AG04449 (cell line): ENCODE measurements at regions of chr2 and their contacts with region 1.

Region 1: DNA sequence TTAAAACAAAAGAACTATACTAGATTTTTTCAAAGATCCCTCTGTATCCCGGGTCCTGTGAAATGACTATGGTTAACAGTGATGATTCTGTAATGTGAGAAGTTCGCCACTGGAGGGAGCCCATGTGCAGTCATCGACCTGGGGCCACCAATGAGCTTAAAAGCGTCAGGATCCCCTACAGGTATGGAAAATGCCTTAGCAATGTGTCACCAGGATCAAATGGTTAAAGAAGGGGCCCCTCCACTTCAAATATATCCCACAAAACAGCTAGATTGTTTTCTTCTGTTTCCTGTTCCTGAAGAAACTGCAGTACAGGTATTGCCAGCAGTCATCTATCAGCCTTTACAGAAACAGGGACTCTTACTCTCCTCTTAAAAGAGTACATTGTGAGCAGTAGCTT is 15.3 kb downstream of the CHRNA1 start:
- DNase-seq: no peak
- H3K4me3 ChIP-seq: no peak overlapping the region
- CTCF ChIP-seq: peak; percentile 72

Region 2: GRCh38 chr2:174682578-174683391 is 66.2 kb before region 1 on chr2:
- CTCF ChIA-PET with region 1: no interaction called
- POLR2A ChIA-PET with region 1: no interaction called
- DNase-seq: no peak
- H3K4me3 ChIP-seq: peak overlapping the region; percentile 80
- CTCF ChIP-seq: no peak

Region 3: DNA sequence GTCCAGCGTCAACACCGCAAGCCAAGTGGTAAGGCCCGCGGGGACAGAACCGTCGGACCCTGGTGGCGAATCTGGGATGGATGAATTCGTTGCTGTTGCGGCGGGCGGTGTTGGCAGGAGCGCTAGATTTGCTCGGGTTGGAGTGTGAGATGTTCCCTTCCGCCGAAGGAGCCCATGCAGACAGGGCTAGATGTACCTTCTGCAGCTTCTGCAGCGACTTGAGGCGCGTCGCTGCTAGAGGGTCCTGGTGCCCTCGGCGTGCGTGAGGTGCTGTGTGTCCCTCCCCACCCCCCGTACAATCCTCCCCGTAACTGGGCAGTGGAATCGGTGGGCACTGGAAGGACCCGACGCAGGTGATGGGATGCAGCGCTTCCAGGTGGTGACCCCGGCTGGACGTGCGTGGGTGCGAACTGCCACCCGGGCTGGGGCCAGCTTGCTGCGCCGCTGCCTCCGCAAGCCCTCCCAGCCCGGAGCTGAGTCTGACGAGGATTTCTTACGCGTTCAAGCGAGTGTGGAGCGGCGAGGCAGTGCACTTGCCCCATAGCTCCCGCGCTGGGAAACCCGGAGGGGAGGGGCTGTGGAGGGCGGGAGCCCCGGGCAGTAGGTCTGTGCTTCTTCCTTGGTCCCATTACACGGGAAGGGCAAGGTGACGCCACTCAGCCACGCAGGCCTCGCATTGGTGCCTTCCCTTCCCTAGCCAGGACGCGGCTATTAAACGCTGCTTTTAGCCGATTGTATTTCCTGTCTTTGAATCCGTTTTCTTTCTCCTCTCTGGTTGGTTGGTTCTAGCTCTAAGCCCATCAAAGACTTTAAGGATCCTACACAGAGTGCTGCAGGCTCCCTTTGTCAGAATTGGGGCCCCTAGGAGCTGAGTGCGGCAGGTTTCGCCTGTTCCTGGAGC is 18.9 kb before region 1 on chr2:
- CTCF ChIA-PET with region 1: interaction called, 38 read pairs
- POLR2A ChIA-PET with region 1: no interaction called
- DNase-seq: no peak
- H3K4me3 ChIP-seq: peak overlapping the region; percentile 40
- CTCF ChIP-seq: no peak

Region 4: GRCh38 chr2:174764280-174765255 is 15.6 kb after region 1 on chr2 and contains the start of gene CHRNA1:
- CTCF ChIA-PET with region 1: interaction called, 96 read pairs
- POLR2A ChIA-PET with region 1: no interaction called
- DNase-seq: no peak
- H3K4me3 ChIP-seq: no peak within 1 kb of the TSS
- CTCF ChIP-seq: no peak

Region 5: DNA sequence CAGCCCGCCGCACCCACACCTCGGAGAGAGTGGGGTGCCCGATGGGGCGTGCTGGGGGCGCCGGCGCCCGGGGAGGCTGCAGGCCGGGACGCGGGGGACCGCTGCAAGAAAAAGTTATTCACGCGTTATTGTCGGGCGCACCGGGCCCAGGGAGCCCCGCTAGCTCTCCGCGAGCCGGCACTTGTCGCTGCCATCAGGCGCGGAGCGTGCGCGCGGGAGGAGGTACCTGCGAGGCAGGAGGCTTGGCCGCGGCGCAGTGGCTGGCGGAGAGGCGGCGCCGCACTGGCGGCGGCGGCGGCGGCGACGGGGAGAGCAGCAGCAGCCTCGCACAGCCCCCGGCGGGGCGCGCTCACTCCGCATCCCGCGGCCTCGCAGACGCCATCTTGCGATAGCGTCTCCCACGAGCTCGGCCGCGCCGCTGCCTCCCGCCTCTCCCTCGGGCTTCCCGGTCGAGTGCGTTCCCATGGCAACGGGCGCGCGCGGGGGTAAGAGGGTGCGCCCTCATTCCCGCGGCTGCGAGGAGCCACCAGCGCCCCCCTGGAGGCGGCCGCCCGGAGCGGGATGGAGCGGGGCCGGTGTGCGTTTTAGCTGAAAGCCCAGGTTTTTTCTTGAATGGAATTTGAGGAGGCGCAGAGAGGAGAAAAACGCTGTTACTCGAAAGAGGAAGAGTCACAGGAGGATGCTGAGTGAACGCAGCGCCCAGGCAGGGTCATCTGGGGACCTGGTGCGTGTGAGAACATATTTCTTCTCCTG is 256.2 kb after region 1 on chr2 and contains the start of gene CHN1:
- CTCF ChIA-PET with region 1: interaction called, 33 read pairs
- POLR2A ChIA-PET with region 1: no interaction called
- DNase-seq: no peak
- H3K4me3 ChIP-seq: peak within 1 kb of the TSS; percentile 64
- CTCF ChIP-seq: peak; percentile 4

Region 6: GRCh38 chr2:175030380-175031271 is 281.7 kb after region 1 on chr2:
- CTCF ChIA-PET with region 1: interaction called, 10 read pairs
- POLR2A ChIA-PET with region 1: no interaction called
- DNase-seq: peak; percentile 3
- H3K4me3 ChIP-seq: no peak overlapping the region
- CTCF ChIP-seq: peak; percentile 50

Region 7: DNA sequence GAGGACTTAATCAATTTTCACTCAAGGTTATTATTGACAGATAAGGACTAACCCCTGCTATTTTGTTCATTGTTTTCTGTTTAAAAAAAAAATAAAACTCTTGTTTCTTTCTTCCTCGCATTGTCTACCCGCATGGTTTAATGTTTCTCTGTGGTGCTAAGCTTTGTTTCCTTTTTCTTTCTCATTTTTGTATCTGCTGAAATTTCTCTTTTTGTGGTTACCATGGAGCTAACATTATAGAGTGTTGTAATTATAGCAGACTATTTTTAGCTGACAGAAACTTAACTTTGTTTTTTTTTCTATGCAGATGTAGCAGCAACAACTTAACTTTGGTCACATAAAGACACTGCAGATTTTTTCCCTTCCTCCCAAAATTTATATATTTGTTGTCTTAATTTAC is 299.3 kb after region 1 on chr2:
- CTCF ChIA-PET with region 1: no interaction called
- POLR2A ChIA-PET with region 1: no interaction called
- DNase-seq: no peak
- H3K4me3 ChIP-seq: no peak overlapping the region
- CTCF ChIP-seq: no peak